Caco-2 (cell line): ENCODE measurements at regions of chr22 and their contacts with region 1.

Region 1: GRCh38 chr22:50399751-50400331 is 56.7 kb downstream of the PPP6R2 start:
- DNase-seq: peak; percentile 53 to 62
- H3K4me3 ChIP-seq: no peak overlapping the region
- H3K4me3 Mint-ChIP-seq: no peak overlapping the region
- H3K27ac Mint-ChIP-seq: no peak overlapping the region
- H3K4me1 ChIP-seq: peaks cover 24% of the 10 kb centered on the region
- H3K4me1 Mint-ChIP-seq: peaks cover 18% of the 10 kb centered on the region
- H3K27me3 ChIP-seq: no peaks in the 10 kb centered on the region
- H3K27me3 Mint-ChIP-seq: no peaks in the 10 kb centered on the region
- CTCF ChIP-seq: peak; percentile 26 to 62

Region 2: GRCh38 chr22:50507991-50508884 is 108.4 kb after region 1 on chr22 and contains the start of gene NCAPH2:
- CTCF ChIA-PET with region 1: interaction called, 3 read pairs
- POLR2A ChIA-PET with region 1: no interaction called
- intact Hi-C with region 1: loop called (anchors 10 kb)
- DNase-seq: peak; percentile 95 to 96
- H3K4me3 ChIP-seq: peak within 1 kb of the TSS; percentile 91
- H3K4me3 Mint-ChIP-seq: peak within 1 kb of the TSS; percentile 93
- H3K27ac Mint-ChIP-seq: peak within 1 kb of the TSS; percentile 90
- H3K4me1 ChIP-seq: peaks cover 5% of the 10 kb centered on the region; the same call in 1 of the 2 replicates
- H3K4me1 Mint-ChIP-seq: peaks cover 11% of the 10 kb centered on the region
- H3K27me3 ChIP-seq: no peaks in the 10 kb centered on the region
- H3K27me3 Mint-ChIP-seq: no peaks in the 10 kb centered on the region
- CTCF ChIP-seq: no peak
- total RNA-seq, gene NCAPH2: 84.3 and 88.9 TPM in 2 replicates

Region 3: DNA sequence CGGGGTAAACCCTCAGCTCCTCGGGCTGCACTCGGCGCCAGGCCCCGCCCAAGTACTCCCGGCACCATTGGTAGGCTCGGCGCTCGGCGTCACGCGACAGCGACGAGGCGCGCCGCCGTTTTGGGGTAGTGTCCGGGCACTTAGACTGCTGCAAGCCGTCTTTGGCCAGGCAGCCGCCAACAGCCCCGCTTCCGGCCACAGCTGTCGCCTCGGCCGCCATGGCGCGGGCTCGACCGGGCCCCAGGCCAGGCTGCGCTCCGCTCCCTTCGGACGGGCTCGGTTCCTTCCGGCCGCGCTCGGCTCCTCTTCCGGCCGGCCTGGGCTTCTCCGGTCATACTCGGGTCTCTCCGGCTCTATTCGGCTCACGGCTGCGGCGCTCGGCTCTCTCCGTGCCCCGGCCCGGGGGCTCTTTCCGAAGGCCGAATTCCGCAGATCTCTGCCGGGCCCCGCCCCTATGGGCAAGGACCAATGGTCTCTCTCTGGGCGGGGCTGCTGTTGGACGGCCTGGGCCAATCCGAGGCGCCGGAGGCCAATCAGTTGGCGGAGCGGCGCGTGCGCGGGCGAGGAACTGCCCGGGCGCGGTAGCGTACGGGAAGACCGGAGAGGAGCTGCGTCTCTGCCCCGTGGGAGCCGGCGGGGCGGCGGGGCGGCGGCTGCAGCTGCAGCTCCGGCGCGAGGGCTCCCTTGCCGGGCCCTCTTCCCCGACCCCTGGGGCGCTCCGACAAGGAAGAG is 182.9 kb after region 1 on chr22 and contains the start of gene CHKB:
- CTCF ChIA-PET with region 1: no interaction called
- POLR2A ChIA-PET with region 1: no interaction called
- intact Hi-C with region 1: no loop called
- DNase-seq: peak; percentile 97 to 99
- H3K4me3 ChIP-seq: peak within 1 kb of the TSS; percentile 69
- H3K4me3 Mint-ChIP-seq: peak within 1 kb of the TSS; percentile 78
- H3K27ac Mint-ChIP-seq: peak within 1 kb of the TSS; percentile 97
- H3K4me1 ChIP-seq: peaks cover 23% of the 10 kb centered on the region
- H3K4me1 Mint-ChIP-seq: no peaks in the 10 kb centered on the region
- H3K27me3 ChIP-seq: no peaks in the 10 kb centered on the region
- H3K27me3 Mint-ChIP-seq: no peaks in the 10 kb centered on the region
- CTCF ChIP-seq: no peak
- total RNA-seq, gene CHKB: 43.3 and 45.4 TPM in 2 replicates